Activated CD8-positive, alpha-beta T cell treated with anti-CD3 and anti-CD28 coated beads, Interleukin-2, amount 10 ng/mL, durations not matched to agents 7 days and 5 days (primary cell): ENCODE measurements at regions of chr2 and their contacts with region 1.

Region 1: DNA sequence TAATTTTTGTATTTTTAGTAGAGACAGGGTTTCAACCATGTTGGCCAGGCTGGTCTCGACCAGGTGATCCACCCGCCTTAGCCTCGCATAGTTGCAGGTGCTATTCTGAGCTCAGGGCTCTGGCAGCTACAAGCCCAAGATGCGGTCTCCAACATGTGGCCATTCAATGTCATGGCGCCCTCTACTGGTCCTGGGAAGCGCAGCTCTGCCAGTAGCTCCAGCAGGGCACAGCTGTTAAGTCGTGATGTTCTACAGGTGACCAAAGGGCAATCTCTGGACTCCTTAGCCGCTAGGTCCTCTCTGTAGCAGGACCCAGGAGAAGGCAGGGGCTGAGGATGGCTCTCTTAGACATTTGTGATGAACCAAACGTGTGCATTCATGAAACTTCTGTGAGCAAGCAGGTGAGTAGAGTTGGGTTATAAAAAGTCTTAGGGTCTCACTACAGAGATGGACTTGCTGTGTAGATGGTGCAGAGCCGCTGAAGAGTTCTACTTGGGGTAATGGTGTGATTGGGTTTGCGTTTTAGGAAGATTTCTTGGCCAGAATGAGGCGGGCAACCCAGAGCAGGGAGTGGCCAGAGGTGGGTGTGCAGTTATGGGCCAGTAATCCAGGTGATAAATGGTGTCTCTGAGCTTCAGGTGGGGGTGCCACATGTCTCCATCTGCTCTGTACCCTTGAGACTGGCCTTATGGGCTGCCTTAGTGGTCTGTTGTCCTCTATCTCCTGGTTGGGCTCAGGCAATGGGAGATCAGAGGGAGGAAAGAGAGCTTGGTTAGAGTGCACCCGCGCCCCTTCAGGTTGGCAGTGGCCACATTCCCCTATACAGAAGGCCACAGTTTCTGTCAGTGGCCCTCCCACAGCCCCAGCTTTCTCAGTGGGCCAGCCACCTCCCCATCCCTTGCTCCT is 31.0 kb downstream of the IL37 start:
- DNase-seq: peak; percentile 85
- ATAC-seq: peak; percentile 96
- H3K4me3 Mint-ChIP-seq: no peak overlapping the region
- H3K27ac Mint-ChIP-seq: no peak overlapping the region
- H3K4me1 Mint-ChIP-seq: peaks cover 6% of the 10 kb centered on the region
- H3K27me3 Mint-ChIP-seq: peaks cover 10% of the 10 kb centered on the region

Region 2: DNA sequence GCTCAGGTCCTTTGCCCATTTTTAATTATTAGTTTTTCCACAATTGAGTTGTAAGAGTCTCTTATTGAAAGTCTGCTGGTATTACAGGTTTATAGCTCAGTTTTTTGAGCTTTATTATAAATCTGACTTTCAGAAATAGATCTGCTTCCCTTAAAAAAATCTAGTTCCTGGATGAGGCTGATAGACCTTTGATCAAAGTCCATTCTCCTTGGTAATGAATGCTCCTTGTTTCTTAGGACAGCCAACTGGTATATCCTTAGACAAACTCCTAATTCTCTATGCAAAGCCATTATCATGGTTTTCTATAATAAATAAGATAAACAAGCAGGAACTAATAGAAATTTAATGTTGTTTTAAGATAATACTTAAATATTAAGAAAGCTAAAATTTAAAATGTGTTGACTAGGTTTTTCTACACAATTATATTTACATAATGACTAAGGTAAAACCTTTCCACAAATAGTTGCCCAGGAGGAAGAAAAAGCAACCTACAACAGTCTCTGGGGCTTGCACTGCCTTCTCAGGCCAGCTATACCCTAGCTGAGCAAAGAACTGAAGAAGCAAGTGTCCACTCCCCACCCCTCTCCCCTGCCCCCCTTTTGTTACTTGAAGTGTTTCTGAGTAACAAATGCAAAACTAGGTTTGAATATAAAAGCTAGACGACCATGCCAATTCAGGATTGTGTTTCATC is 204.3 kb before region 1 on chr2:
- CTCF ChIA-PET with region 1: interaction called, 45 read pairs
- POLR2A ChIA-PET with region 1: no interaction called
- DNase-seq: no peak
- ATAC-seq: no peak
- H3K4me3 Mint-ChIP-seq: no peak overlapping the region
- H3K27ac Mint-ChIP-seq: no peak overlapping the region
- H3K4me1 Mint-ChIP-seq: no peaks in the 10 kb centered on the region
- H3K27me3 Mint-ChIP-seq: no peaks in the 10 kb centered on the region

Region 3: GRCh38 chr2:112764071-112765044 is 177.6 kb before region 1 on chr2 and contains the start of gene CKAP2L:
- CTCF ChIA-PET with region 1: interaction called, 14 read pairs
- POLR2A ChIA-PET with region 1: interaction called, 3 read pairs
- DNase-seq: peak; percentile 99
- ATAC-seq: peak; percentile 98
- H3K4me3 Mint-ChIP-seq: peak within 1 kb of the TSS; percentile 99
- H3K27ac Mint-ChIP-seq: peak within 1 kb of the TSS; percentile 98
- H3K4me1 Mint-ChIP-seq: peaks cover 52% of the 10 kb centered on the region
- H3K27me3 Mint-ChIP-seq: no peaks in the 10 kb centered on the region
- total RNA-seq, gene CKAP2L: 59.3 to 63.4 TPM

Region 4: GRCh38 chr2:112869258-112869885 is 72.6 kb before region 1 on chr2:
- CTCF ChIA-PET with region 1: no interaction called
- POLR2A ChIA-PET with region 1: no interaction called
- DNase-seq: no peak
- ATAC-seq: no peak
- H3K4me3 Mint-ChIP-seq: no peak overlapping the region
- H3K27ac Mint-ChIP-seq: no peak overlapping the region
- H3K4me1 Mint-ChIP-seq: peaks cover 2% of the 10 kb centered on the region
- H3K27me3 Mint-ChIP-seq: peaks cover 52% of the 10 kb centered on the region

Region 5: DNA sequence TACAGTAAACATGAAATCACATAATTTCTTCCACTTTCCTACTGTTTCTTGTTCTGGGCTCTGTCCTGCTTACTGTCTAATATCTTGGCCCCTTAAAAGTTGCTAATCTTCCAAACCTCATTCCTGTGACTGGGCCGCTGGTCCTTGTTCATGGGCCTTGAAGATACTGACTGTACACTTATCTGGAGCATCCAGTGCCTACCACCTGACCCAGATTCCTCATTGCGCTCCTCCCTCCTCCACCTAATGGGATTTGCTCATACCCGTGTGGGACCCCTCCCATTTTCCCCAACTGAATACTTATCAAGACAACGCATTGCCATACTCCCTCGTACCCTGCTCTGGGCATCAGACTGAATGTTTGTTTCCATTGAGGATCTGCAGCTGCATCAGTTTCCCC is 37.1 kb before region 1 on chr2:
- CTCF ChIA-PET with region 1: interaction called, 21 read pairs
- POLR2A ChIA-PET with region 1: no interaction called
- DNase-seq: no peak
- ATAC-seq: no peak
- H3K4me3 Mint-ChIP-seq: no peak overlapping the region
- H3K27ac Mint-ChIP-seq: no peak overlapping the region
- H3K4me1 Mint-ChIP-seq: no peaks in the 10 kb centered on the region
- H3K27me3 Mint-ChIP-seq: no peaks in the 10 kb centered on the region

Region 6: GRCh38 chr2:112958428-112959108 is 16.6 kb after region 1 on chr2:
- CTCF ChIA-PET with region 1: interaction called, 30 read pairs
- POLR2A ChIA-PET with region 1: no interaction called
- DNase-seq: peak; percentile 57
- ATAC-seq: peak; percentile 86
- H3K4me3 Mint-ChIP-seq: no peak overlapping the region
- H3K27ac Mint-ChIP-seq: no peak overlapping the region
- H3K4me1 Mint-ChIP-seq: no peaks in the 10 kb centered on the region
- H3K27me3 Mint-ChIP-seq: peaks cover 3% of the 10 kb centered on the region

Region 7: GRCh38 chr2:113157118-113157896 is 215.3 kb after region 1 on chr2:
- CTCF ChIA-PET with region 1: no interaction called
- POLR2A ChIA-PET with region 1: no interaction called
- DNase-seq: peak; percentile 61
- ATAC-seq: peak; percentile 90
- H3K4me3 Mint-ChIP-seq: peak overlapping the region; percentile 86
- H3K27ac Mint-ChIP-seq: peak overlapping the region; percentile 82
- H3K4me1 Mint-ChIP-seq: peaks cover 33% of the 10 kb centered on the region
- H3K27me3 Mint-ChIP-seq: peaks cover 7% of the 10 kb centered on the region